ENCODE measurements at regions of chr10 and their contacts with region 1.

Region 1: GRCh38 chr10:125795128-125795527 is 19.5 kb upstream of the MMP21 start:
- DNase-seq: no peak
- H3K27ac ChIP-seq: no peak overlapping the region
- CTCF ChIP-seq: no peak

Region 2: GRCh38 chr10:125762692-125763648 is 32.2 kb before region 1 on chr10:
- CTCF ChIA-PET with region 1: no interaction called
- POLR2A ChIA-PET with region 1: interaction called, 10 read pairs
- DNase-seq: no peak
- H3K27ac ChIP-seq: no peak overlapping the region
- CTCF ChIP-seq: no peak